AG04449 (cell line): ENCODE measurements at regions of chr18 and their contacts with region 1.

Region 1: DNA sequence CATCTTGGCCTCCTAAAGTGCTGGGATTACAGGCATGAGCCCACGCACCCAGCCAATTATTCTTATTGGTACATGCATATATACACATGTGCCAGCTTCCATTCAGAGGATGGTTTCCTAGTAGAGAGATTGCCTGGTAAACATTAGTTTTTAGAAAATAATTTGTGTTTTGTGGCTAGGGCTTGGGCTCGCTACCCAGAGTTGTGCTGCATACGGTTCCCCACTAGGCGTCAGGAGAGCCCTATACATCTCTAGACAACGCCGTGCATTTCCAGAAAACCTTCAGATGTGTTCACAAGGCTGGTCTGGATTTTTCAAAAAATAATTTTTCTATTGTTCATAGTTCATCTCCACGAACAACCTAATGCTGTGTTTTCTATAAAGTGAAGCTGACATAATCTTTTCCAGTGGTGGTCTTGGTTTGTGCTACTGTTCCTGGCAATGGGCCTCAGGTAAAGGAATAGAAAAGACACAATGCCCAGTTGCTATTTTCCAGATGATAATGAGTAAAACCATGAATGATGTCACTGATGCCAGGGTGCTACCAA is 14.7 kb upstream of the AFG3L2 start:
- DNase-seq: no peak
- H3K4me3 ChIP-seq: no peak overlapping the region
- CTCF ChIP-seq: peak; percentile 79

Region 2: GRCh38 chr18:12376718-12377555 is 14.8 kb before region 1 on chr18 and contains the start of gene AFG3L2:
- CTCF ChIA-PET with region 1: interaction called, 35 read pairs
- POLR2A ChIA-PET with region 1: no interaction called
- DNase-seq: no peak
- H3K4me3 ChIP-seq: peak within 1 kb of the TSS; percentile 80
- CTCF ChIP-seq: peak; percentile 7

Region 3: GRCh38 chr18:12417687-12418086 is 26.0 kb after region 1 on chr18:
- CTCF ChIA-PET with region 1: interaction called, 16 read pairs
- POLR2A ChIA-PET with region 1: no interaction called
- DNase-seq: no peak
- H3K4me3 ChIP-seq: no peak overlapping the region
- CTCF ChIP-seq: no peak

Region 4: DNA sequence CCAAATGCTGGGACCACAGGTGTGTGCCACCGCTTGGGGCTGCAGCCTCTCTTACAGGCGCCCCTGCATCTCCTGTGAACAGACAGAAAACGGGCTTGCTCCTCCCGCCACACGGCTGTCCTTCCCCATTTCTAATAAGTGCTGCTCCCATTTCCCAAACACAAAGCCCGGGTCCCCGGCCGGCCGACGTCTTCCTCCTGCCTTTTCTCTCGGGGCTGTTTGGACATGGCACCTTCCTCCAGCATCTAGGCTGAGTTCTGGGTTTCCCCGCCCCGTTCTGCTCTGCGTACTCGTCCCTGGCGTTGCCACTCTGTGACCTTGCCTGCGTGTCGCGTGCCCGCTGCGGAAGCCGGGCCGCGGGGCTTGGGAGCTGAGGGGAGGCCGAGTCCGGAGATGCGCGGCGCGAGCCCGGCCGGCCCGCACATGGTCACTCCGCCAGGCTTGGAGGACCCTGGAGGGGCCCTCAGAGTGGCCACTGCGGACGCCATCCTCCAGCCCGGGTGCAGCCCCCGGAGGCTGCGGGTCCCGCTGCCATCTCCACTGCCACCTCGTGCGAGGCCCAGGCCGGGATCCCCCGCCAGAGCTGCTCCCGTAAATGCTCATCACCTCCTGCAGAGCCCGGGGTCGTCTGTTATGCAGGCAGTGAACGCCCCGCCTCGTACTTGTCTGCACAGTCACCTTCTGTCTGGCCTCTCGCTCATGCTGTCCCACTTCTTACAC is 42.3 kb after region 1 on chr18:
- CTCF ChIA-PET with region 1: no interaction called
- POLR2A ChIA-PET with region 1: no interaction called
- DNase-seq: no peak
- H3K4me3 ChIP-seq: no peak overlapping the region
- CTCF ChIP-seq: no peak

Region 5: GRCh38 chr18:12552884-12553242 is 161.2 kb after region 1 on chr18:
- CTCF ChIA-PET with region 1: no interaction called
- POLR2A ChIA-PET with region 1: no interaction called
- DNase-seq: no peak
- H3K4me3 ChIP-seq: no peak overlapping the region
- CTCF ChIP-seq: no peak

Region 6: DNA sequence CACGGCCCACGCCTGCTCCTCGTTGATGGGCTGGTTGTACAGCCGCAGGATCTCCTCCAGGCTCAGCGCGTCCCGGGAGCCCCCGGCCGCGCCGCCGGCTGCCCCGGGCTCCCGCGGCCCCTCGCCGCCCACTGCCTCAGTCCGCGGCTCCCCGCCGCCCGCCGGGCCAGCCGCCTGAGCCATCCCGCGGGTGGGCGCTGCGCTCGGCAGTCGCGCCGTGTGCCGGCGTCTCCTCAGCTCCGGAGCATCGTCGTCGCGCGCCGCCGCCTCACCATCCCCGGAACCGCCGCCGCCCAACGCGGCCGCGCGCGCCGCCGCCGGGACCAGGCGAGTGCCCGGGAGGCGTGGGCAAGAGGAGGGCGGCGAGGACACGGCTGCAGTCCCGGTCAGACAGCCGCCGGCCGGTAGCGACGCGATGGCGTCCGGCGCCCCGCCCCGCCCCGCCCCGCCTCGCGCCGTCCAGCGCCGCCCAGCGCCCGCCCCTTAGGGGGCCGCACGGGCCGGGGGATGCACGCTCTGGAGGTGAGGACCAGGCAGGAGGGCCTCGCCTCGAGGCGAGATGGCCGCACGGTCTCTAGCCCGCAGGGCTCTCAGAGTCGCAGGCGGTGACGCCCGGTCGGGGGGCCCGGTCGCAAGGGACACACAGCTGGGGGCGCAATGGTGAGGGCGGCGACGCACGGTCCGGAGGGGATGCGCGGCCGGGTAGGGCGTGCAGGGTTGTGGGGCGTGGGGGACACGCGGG is 266.2 kb after region 1 on chr18 and contains the start of gene SPIRE1:
- CTCF ChIA-PET with region 1: interaction called, 336 read pairs
- POLR2A ChIA-PET with region 1: no interaction called
- DNase-seq: no peak
- H3K4me3 ChIP-seq: peak within 1 kb of the TSS; percentile 81
- CTCF ChIP-seq: no peak

Region 7: DNA sequence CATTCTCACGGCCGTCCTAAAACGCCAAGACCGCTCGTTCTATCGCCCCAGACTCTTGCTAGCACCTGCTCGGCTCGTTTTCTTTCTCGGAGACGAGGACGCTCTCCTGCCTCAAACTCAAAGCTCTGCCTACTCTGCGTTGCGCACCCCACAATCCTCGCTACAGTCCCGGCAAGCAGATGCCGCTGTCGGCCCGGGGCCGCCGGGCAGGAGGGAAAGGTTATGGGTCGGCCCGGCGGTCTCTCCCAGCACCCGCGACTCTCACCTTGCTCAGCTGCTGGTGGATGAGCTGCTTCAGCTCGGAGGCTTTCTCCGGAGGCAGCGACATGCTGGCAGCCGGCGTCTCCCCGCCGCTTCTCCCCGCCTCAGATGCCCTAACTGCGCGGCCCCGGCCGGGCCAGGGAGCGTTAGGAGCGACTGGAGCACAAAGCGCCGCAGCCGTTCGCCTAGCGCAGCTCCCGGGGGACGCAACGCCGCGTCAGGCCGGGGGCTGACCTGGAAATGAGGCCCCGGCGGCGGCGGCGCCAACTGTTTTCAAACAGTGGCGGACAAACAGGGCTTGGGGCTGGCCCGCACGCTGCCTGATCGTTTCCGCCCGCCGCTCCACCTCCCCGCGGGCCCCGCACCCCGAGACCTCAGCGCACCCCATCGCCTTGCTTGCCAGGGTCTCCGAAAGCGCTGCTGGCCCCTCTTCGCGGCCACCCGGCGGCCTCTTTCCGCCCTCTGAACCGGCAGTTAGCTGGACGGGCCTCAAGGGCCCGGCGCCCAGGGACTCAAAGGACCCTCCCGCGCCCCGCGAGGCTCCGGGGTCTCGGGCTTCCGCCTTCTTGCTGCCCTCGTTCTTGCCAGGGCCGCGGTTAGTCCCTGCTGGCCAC is 310.8 kb after region 1 on chr18 and contains the starts of genes CEP76 and PSMG2:
- CTCF ChIA-PET with region 1: interaction called, 17 read pairs
- POLR2A ChIA-PET with region 1: no interaction called
- DNase-seq: no peak
- H3K4me3 ChIP-seq: peak within 1 kb of the TSS; percentile 84
- CTCF ChIP-seq: no peak